HCT116 (cell line): ENCODE measurements at regions of chr13 and their contacts with region 1.

Region 1: GRCh38 chr13:34076943-34077703 is 259.2 kb downstream of the RFC3 start:
- DNase-seq: peak; percentile 7
- ATAC-seq: peak; percentile 68
- H3K4me3 ChIP-seq: no peak overlapping the region
- H3K27ac ChIP-seq: no peak overlapping the region
- H3K4me1 ChIP-seq: no peaks in the 10 kb centered on the region
- H3K27me3 ChIP-seq: no peaks in the 10 kb centered on the region
- CTCF ChIP-seq: peak; percentile 54 to 73 (median 64); a peak in 5 of 6 replicates
- POLR2A ChIP-seq: no peak
- RAD21 ChIP-seq: peak; percentile 81

Region 2: GRCh38 chr13:33799950-33800592 is 277.1 kb before region 1 on chr13:
- CTCF ChIA-PET with region 1: interaction called, 4 read pairs
- POLR2A ChIA-PET with region 1: no interaction called
- RAD21 ChIA-PET with region 1: no interaction called
- intact Hi-C with region 1: loop called (anchors 5 kb)
- DNase-seq: peak; percentile 12
- ATAC-seq: peak; percentile 75
- H3K4me3 ChIP-seq: no peak overlapping the region
- H3K27ac ChIP-seq: no peak overlapping the region
- H3K4me1 ChIP-seq: no peaks in the 10 kb centered on the region
- H3K27me3 ChIP-seq: no peaks in the 10 kb centered on the region
- CTCF ChIP-seq: peak; percentile 16 to 58 (median 26); a peak in 3 of 6 replicates
- POLR2A ChIP-seq: no peak
- RAD21 ChIP-seq: peak; percentile 52; the same call in 1 of the 2 replicates

Region 3: GRCh38 chr13:33874873-33875272 is 202.2 kb before region 1 on chr13:
- CTCF ChIA-PET with region 1: no interaction called
- POLR2A ChIA-PET with region 1: no interaction called
- RAD21 ChIA-PET with region 1: no interaction called
- intact Hi-C with region 1: loop called (anchors 1 kb)
- DNase-seq: no peak
- ATAC-seq: no peak
- H3K4me3 ChIP-seq: no peak overlapping the region
- H3K27ac ChIP-seq: no peak overlapping the region
- H3K4me1 ChIP-seq: no peaks in the 10 kb centered on the region
- H3K27me3 ChIP-seq: no peaks in the 10 kb centered on the region
- CTCF ChIP-seq: peak in 1 of 3 experiments; percentile 36; a peak in 3 of 6 replicates
- POLR2A ChIP-seq: no peak
- RAD21 ChIP-seq: peak; percentile 14; the same call in 1 of the 2 replicates

Region 4: GRCh38 chr13:33931397-33932311 is 145.5 kb before region 1 on chr13:
- CTCF ChIA-PET with region 1: interaction called, 18 read pairs
- POLR2A ChIA-PET with region 1: no interaction called
- RAD21 ChIA-PET with region 1: interaction called in 1 of 2 experiments, 3 read pairs
- intact Hi-C with region 1: loop called (anchors 1 kb)
- DNase-seq: peak; percentile 46
- ATAC-seq: peak; percentile 96
- H3K4me3 ChIP-seq: no peak overlapping the region
- H3K27ac ChIP-seq: no peak overlapping the region
- H3K4me1 ChIP-seq: peaks cover 0 to 5% of the 10 kb centered on the region in 2 experiments; a peak in 1 of 4 replicates
- H3K27me3 ChIP-seq: no peaks in the 10 kb centered on the region
- CTCF ChIP-seq: peak; percentile 48 to 72 (median 49); a peak in 5 of 6 replicates
- POLR2A ChIP-seq: no peak
- RAD21 ChIP-seq: peak; percentile 81